ENCODE measurements at regions of chr12 and their contacts with region 1.

Region 1: DNA sequence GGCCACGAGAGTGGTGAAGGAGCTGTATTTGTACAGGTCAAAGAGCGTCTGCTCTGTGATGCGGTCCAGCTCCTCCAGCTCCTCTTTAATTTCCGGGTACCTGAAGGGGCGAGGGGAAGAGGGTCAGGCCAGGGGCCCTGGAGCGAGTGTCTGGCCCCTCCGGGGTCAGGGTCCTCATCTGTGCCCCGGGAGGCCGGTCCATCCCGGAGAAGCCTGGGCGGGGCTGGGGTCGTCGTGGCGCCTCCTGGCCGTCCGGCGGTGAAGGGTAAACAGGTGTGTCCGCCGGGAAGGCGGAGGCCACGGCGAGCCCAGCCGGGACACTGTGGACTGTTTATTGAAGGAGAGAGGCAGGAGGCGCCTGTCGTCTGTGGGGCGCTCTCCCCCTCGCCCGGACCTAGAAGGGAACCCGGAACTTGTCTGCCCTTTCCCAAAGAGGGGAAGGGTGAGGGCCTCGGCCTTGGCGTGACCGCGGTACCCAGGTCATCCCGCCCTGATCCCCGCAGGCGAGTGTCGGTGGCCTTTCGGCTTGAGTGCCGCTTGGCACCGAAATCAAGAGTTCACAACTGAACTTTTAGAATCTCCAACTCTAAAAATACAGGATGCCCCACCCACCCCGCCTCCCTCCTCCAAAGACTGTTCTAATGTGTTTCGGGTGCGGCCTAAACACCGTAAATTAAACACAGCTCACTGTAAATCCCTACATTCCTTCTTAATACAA is 11.6 kb downstream of the SCNN1A start:
- DNase-seq: no peak
- H3K4me3 ChIP-seq: no peak overlapping the region
- H3K27ac ChIP-seq: no peak overlapping the region
- H3K4me1 ChIP-seq: peaks cover 29% of the 10 kb centered on the region
- H3K27me3 ChIP-seq: no peaks in the 10 kb centered on the region
- CTCF ChIP-seq: no peak

Region 2: DNA sequence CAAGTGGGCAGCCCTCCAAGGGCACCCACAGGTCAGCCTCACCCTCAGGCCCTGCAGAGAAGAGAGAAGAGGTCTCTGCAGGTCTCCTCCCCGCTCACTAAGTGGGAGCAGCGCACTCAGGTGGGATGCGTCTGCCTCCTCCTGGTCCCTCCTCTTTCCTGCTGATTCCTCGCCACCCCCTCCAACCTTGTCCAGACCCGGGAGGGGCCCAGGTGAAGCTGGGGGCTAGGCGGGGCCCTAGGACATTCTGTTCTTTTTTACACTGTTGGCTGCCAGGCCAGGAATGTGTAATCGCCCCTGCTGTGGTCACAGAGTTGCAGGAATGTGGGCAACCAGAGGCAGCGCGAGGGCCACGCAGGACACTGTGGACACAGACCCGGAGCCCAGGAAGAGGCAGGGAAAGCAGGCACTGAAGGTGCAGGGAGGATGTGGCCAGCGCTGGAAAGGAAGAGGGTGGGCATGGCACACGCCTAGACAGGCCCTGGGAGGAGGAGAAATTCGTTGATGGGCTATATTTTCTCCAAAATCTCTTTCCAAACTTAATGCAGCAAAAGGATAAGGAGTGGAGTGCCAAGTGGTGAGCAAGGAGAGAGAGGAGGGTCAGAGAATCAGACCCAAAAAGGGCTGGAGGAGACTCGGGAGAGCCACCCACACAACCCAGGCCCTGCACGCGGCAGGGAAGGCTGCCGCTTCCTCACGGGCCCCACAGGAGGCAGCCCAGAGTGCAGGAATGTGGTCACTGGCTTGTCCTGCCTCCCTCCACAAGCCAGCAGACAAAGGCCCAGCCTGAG is 12.5 kb after region 1 on chr12:
- CTCF ChIA-PET with region 1: interaction called, 14 read pairs
- dilution Hi-C with region 1: no loop called
- in situ Hi-C with region 1: no loop called
- intact Hi-C with region 1: no loop called
- DNase-seq: peak; percentile 90
- H3K4me3 ChIP-seq: peak overlapping the region; percentile 64 to 90 (median 87)
- H3K27ac ChIP-seq: peak overlapping the region; percentile 92
- H3K4me1 ChIP-seq: peaks cover 41% of the 10 kb centered on the region
- H3K27me3 ChIP-seq: no peaks in the 10 kb centered on the region
- CTCF ChIP-seq: peak; percentile 29 to 64